Activated naive CD8-positive, alpha-beta T cell treated with anti-CD3 and anti-CD28 coated beads, Interleukin-2, amount 10 ng/mL, durations not matched to agents 7 days and 5 days (primary cell): ENCODE measurements at regions of chr5 and their contacts with region 1.

Region 1: GRCh38 chr5:67648201-67648671 is 451.6 kb upstream of the CD180 start:
- DNase-seq: no peak
- ATAC-seq: no peak
- H3K4me3 Mint-ChIP-seq: no peak overlapping the region
- H3K27ac Mint-ChIP-seq: no peak overlapping the region
- H3K4me1 Mint-ChIP-seq: peaks cover 1% of the 10 kb centered on the region
- H3K27me3 Mint-ChIP-seq: peaks cover 2% of the 10 kb centered on the region

Region 2: GRCh38 chr5:67620424-67621397 is 27.5 kb before region 1 on chr5:
- POLR2A ChIA-PET with region 1: interaction called, 10 read pairs
- DNase-seq: no peak
- ATAC-seq: no peak
- H3K4me3 Mint-ChIP-seq: no peak overlapping the region
- H3K27ac Mint-ChIP-seq: no peak overlapping the region
- H3K4me1 Mint-ChIP-seq: no peaks in the 10 kb centered on the region
- H3K27me3 Mint-ChIP-seq: peaks cover 4% of the 10 kb centered on the region